ENCODE measurements at regions of chr16 and their contacts with region 1.

Region 1: DNA sequence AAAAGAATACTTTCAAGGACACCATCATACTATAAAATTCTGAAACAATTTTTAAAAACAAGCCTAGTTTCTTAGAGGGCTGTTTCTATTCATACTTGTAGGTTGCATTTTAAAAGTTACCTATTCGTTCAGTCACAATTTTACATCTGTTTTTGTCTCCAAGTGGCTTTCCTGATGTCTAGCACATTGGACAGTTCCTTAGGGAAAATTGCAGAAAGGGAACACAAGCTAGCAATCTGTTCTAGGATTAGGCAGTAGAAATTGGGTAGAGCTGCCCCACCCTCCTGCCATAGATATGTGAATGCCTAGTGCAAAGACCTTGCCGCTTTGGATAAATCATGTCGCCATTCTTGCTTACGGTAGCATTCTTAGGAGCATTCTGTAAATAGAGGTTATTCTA is 358.9 kb downstream of the RBFOX1 start:
- DNase-seq: no peak
- H3K4me3 ChIP-seq: no peak overlapping the region
- H3K27ac ChIP-seq: no peak overlapping the region
- H3K4me1 ChIP-seq: no peaks in the 10 kb centered on the region
- H3K27me3 ChIP-seq: no peaks in the 10 kb centered on the region
- CTCF ChIP-seq: no peak

Region 2: GRCh38 chr16:7638306-7638705 is 53.2 kb before region 1 on chr16:
- CTCF ChIA-PET with region 1: no interaction called
- dilution Hi-C with region 1: no loop called
- in situ Hi-C with region 1: loop called in 1 of 2 experiments (anchors 10 kb)
- intact Hi-C with region 1: no loop called
- DNase-seq: no peak
- H3K4me3 ChIP-seq: no peak overlapping the region
- H3K27ac ChIP-seq: no peak overlapping the region
- H3K4me1 ChIP-seq: no peaks in the 10 kb centered on the region
- H3K27me3 ChIP-seq: no peaks in the 10 kb centered on the region
- CTCF ChIP-seq: no peak

Measured in mammary epithelial cell (primary cell).